ENCODE measurements at regions of chr21 and their contacts with region 1.

Region 1: GRCh38 chr21:42164064-42164789 is 54.7 kb upstream of the ABCG1 start:
- DNase-seq: peak; percentile 71
- ATAC-seq: peak; percentile 66
- H3K4me3 Mint-ChIP-seq: no peak overlapping the region
- H3K27ac Mint-ChIP-seq: no peak overlapping the region
- H3K4me1 Mint-ChIP-seq: peaks cover 40% of the 10 kb centered on the region
- H3K27me3 Mint-ChIP-seq: peaks cover 5% of the 10 kb centered on the region

Region 2: GRCh38 chr21:41933313-41934086 is 230.7 kb before region 1 on chr21:
- CTCF ChIA-PET with region 1: no interaction called
- POLR2A ChIA-PET with region 1: no interaction called
- DNase-seq: no peak
- ATAC-seq: no peak
- H3K4me3 Mint-ChIP-seq: no peak overlapping the region
- H3K27ac Mint-ChIP-seq: no peak overlapping the region
- H3K4me1 Mint-ChIP-seq: peaks cover 11% of the 10 kb centered on the region
- H3K27me3 Mint-ChIP-seq: peaks cover 23% of the 10 kb centered on the region

Region 3: DNA sequence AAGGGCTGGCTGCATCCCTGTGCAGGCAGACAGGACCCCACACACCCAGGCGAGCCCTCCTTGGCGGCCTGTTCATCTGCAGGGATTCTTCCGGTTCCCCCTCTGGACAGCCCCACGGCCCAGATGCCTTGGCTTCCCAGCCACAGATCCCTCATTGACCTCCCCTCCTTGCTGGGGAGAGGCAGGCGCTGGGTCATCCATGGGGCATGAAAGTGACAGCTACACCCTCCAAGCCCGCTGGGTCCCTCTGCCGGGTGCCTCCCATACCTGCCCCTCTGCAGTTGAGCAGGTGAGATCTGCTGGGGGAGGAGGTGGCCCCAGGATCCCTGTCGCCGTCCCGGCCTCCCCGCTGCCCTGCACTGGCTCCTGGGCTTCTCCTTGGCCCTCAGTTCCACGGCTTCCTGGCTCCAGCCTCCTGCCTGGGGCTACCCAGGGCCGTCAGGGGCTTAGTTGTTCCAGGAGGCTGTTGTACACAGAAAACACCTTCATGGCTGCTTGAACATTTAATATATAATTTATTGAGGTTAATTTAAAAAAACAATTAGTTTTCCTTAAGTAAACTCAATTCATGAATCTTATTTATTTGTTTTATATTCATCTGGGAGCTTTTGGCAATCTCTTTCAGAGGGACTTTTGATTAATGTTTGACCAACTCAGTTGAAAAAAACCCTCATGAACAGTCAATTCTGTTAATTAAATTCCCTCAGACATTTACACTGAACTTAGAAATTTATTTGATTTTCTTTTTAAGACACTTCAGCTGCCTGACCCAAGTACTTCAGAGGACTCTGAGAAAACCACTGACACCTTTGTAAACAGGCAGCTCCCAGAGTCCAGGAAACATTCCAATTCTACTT is 12.9 kb before region 1 on chr21:
- CTCF ChIA-PET with region 1: interaction called, 11 read pairs
- POLR2A ChIA-PET with region 1: interaction called, 3 read pairs
- DNase-seq: no peak
- ATAC-seq: no peak
- H3K4me3 Mint-ChIP-seq: no peak overlapping the region
- H3K27ac Mint-ChIP-seq: no peak overlapping the region
- H3K4me1 Mint-ChIP-seq: no peaks in the 10 kb centered on the region
- H3K27me3 Mint-ChIP-seq: no peaks in the 10 kb centered on the region

Region 4: GRCh38 chr21:42187976-42188653 is 23.9 kb after region 1 on chr21:
- CTCF ChIA-PET with region 1: interaction called, 30 read pairs
- POLR2A ChIA-PET with region 1: interaction called, 3 read pairs
- DNase-seq: peak; percentile 93
- ATAC-seq: peak; percentile 95
- H3K4me3 Mint-ChIP-seq: peak overlapping the region; percentile 53
- H3K27ac Mint-ChIP-seq: peak overlapping the region; percentile 94
- H3K4me1 Mint-ChIP-seq: peaks cover 76% of the 10 kb centered on the region
- H3K27me3 Mint-ChIP-seq: peaks cover 6% of the 10 kb centered on the region

Region 5: GRCh38 chr21:42193131-42193671 is 29.0 kb after region 1 on chr21:
- CTCF ChIA-PET with region 1: interaction called, 30 read pairs
- POLR2A ChIA-PET with region 1: interaction called, 3 read pairs
- DNase-seq: peak; percentile 87
- ATAC-seq: peak; percentile 60
- H3K4me3 Mint-ChIP-seq: peak overlapping the region; percentile 16
- H3K27ac Mint-ChIP-seq: peak overlapping the region; percentile 71
- H3K4me1 Mint-ChIP-seq: peaks cover 77% of the 10 kb centered on the region
- H3K27me3 Mint-ChIP-seq: peaks cover 10% of the 10 kb centered on the region

Region 6: DNA sequence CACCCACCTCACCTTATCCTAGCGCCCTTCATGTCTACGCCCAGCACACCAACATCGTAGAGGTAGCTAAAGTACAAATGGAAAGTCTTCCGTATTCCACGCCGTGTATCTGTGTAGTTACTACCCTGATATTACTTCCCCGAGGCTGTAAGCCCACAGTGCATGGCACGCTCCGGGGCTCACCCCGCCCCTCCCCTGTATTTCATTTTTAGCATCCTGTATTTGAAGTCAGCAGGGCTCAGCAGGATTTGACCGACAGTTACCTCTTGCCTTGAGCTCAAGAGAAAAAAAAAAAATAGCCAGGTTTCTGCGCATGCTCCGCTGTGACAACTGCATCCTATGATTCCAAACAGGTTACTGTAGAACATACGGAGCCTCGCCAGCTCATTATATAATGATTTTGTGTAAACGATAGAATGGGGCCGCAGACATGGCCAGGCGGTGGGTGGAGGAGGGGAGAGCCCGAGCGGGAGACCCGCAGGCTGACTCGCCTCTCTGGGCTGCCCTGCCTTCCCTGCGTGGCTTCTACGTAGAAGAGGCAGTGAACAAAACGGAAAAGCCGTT is 56.0 kb after region 1 on chr21:
- CTCF ChIA-PET with region 1: interaction called, 37 read pairs
- POLR2A ChIA-PET with region 1: no interaction called
- DNase-seq: peak; percentile 84
- ATAC-seq: peak; percentile 77
- H3K4me3 Mint-ChIP-seq: peak overlapping the region; percentile 82
- H3K27ac Mint-ChIP-seq: peak overlapping the region; percentile 78
- H3K4me1 Mint-ChIP-seq: peaks cover 16% of the 10 kb centered on the region
- H3K27me3 Mint-ChIP-seq: no peaks in the 10 kb centered on the region

Region 7: DNA sequence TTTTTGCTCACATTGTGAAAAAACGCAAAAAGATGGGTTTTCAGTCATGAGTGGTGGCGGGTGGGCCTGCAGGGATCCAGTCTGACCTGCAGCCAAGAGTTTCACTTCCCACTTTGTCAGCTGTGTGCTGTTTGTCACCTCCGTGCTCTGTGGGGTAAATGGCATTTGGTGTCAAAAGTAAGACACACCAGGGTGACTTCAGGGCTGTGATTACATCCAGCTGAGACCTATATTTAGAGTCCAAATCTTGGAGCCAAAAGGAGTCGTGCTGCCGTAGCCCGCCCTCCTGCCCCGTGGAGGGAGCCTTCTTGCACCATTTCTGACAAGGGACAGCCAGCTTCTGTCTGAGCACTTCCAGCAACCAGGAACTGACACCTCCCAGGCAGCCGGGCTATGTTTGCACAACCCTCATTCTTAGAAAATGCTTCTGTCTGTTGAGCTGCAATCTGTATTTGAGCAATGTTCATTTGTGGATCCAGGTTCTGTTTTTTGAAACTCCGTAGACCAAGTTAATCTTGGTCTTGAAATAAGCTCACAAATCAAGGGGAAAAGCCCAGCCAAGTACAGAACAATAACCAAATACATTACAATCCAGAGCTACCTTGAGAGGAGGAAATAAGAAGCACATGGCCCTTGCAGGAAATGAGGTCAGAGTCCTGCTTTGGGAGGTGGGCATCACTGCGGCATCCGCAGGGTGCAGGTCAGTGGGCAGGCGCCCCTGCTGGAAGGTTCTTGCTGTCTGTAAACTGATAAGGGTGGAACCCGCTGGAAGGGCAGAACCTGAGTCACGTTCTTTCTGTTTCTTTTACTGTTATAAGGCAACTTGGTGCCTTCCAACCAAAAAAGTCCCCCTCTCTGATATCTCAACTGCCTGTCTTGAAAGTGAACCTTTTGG is 69.1 kb after region 1 on chr21:
- CTCF ChIA-PET with region 1: interaction called, 22 read pairs
- POLR2A ChIA-PET with region 1: interaction called, 3 read pairs
- DNase-seq: peak; percentile 84
- ATAC-seq: peak; percentile 55
- H3K4me3 Mint-ChIP-seq: peak overlapping the region; percentile 63
- H3K27ac Mint-ChIP-seq: peak overlapping the region; percentile 85
- H3K4me1 Mint-ChIP-seq: peaks cover 98% of the 10 kb centered on the region
- H3K27me3 Mint-ChIP-seq: no peaks in the 10 kb centered on the region

Region 8: GRCh38 chr21:42238185-42238934 is 74.1 kb after region 1 on chr21:
- CTCF ChIA-PET with region 1: interaction called, 22 read pairs
- POLR2A ChIA-PET with region 1: interaction called, 3 read pairs
- DNase-seq: peak; percentile 68
- ATAC-seq: peak; percentile 41
- H3K4me3 Mint-ChIP-seq: peak overlapping the region; percentile 47
- H3K27ac Mint-ChIP-seq: peak overlapping the region; percentile 75
- H3K4me1 Mint-ChIP-seq: peaks cover 62% of the 10 kb centered on the region
- H3K27me3 Mint-ChIP-seq: no peaks in the 10 kb centered on the region